Posterior vena cava (tissue), 2 donors: ENCODE measurements at regions of chr12 and their contacts with region 1.

Region 1: GRCh38 chr12:19529951-19530635 is 90.8 kb downstream of the AEBP2 start:
- DNase-seq: no peak

Region 2: GRCh38 chr12:19018302-19018970 is 511.7 kb before region 1 on chr12:
- intact Hi-C with region 1: loop called in 1 of 2 experiments (anchors 10 kb)
- DNase-seq: no peak

Region 3: DNA sequence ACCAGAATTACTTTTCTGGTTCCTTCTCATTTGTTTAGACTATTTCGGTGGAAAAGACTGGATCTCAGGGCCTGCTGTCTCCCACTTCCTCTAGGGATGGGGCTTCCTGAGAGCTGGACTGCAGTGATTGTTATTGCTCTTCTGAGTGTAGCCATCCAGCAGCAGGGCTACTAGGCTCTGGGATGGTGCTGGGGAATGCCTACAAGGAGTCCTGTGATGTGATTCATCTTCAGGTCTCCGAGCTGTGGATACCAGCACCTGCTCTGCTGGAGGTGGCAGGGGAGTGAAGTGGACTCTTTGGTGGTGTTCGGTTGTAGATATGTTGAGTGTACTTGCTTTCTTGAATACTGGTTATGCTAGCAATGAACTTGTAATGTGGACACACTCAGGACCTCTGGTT is 48.1 kb before region 1 on chr12:
- intact Hi-C with region 1: no loop called
- DNase-seq: no peak

Region 4: DNA sequence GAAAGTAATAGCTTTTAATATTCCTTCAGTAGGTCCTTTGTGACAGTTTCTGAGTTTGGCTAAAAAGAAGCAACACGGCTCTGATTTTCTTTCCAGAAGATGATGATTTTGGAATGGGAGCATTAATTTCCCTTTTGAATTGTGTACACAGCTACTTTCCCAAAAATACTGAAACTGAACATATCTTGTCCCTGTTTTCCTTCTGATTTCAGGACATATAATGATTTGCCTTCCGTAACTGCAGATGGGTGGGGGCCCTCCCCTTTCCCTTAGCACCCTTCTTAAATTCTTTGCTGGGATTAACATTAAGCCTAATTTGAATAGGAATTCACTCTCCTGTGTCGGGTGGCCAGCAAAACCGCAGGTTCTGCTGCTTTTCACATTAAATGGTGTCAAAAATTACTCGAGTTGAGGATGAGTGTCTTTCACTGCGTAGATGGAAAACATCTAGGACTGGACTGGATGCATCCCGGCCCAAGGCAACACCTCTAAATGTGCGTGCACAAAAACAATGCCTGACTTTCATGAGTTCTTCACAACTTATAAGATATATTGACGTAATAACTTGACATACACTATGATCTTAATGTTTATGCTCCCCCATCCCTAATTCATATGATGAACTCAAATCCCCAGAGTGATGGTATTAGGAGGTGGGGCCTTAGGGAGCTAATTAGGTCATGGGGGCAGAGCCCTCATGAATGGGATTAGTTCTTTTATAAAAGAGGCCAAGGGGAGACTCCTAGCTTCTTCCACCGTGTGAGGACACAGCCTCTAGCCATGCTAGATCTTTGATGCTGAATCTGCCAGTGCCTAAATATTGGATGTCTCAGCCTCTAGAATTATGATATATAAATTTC is 67.3 kb after region 1 on chr12:
- intact Hi-C with region 1: no loop called
- DNase-seq: no peak

Region 5: GRCh38 chr12:19608039-19608438 is 77.9 kb after region 1 on chr12:
- intact Hi-C with region 1: no loop called
- DNase-seq: no peak